Endothelial cell of umbilical vein (primary cell): ENCODE measurements at regions of chr10 and their contacts with region 1.

Region 1: GRCh38 chr10:95561182-95562075 is at the start of gene SORBS1:
- DNase-seq: peak; percentile 98
- H3K4me3 ChIP-seq: peak within 1 kb of the TSS; percentile 74 to 94 (median 88)
- H3K27ac ChIP-seq: peak within 1 kb of the TSS; percentile 55
- H3K4me1 ChIP-seq: peaks cover 2% of the 10 kb centered on the region
- H3K27me3 ChIP-seq: peaks cover 2 to 7% of the 10 kb centered on the region in 2 experiments
- CTCF ChIP-seq: no peak
- POLR2A ChIP-seq: peak; percentile 65
- total RNA-seq, gene SORBS1: 3.2 and 7.9 TPM in 2 replicates

Region 2: DNA sequence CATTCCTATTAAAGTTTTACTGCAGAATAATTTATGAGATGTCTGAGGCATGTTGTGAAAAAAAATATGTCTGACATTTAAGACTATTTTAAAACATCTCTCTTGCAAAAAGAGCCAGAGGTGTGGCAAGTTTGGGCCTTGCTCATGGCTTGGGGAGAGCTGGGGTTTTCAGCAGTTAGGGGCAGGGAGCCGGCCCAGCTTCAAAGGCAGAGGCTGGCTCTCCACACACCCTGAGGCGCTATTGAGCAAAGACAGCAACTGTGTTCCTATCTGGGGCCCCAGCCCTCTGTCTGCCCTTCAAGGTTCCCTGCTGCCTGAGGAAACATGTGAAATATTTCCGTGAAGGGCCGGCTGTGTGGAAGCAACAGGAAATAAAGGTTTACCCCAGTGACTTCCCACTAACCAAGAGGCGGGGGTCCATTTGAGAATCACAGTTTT is 94.2 kb before region 1 on chr10:
- CTCF ChIA-PET with region 1: no interaction called
- POLR2A ChIA-PET with region 1: interaction called, 4 read pairs
- dilution Hi-C with region 1: no loop called
- intact Hi-C with region 1: loop called (anchors 1 kb)
- DNase-seq: peak; percentile 81
- H3K4me3 ChIP-seq: no peak overlapping the region
- H3K27ac ChIP-seq: no peak overlapping the region
- H3K4me1 ChIP-seq: peaks cover 8% of the 10 kb centered on the region
- H3K27me3 ChIP-seq: peaks cover 0 to 2% of the 10 kb centered on the region in 2 experiments
- CTCF ChIP-seq: peak; percentile 8 to 54
- POLR2A ChIP-seq: no peak

Region 3: DNA sequence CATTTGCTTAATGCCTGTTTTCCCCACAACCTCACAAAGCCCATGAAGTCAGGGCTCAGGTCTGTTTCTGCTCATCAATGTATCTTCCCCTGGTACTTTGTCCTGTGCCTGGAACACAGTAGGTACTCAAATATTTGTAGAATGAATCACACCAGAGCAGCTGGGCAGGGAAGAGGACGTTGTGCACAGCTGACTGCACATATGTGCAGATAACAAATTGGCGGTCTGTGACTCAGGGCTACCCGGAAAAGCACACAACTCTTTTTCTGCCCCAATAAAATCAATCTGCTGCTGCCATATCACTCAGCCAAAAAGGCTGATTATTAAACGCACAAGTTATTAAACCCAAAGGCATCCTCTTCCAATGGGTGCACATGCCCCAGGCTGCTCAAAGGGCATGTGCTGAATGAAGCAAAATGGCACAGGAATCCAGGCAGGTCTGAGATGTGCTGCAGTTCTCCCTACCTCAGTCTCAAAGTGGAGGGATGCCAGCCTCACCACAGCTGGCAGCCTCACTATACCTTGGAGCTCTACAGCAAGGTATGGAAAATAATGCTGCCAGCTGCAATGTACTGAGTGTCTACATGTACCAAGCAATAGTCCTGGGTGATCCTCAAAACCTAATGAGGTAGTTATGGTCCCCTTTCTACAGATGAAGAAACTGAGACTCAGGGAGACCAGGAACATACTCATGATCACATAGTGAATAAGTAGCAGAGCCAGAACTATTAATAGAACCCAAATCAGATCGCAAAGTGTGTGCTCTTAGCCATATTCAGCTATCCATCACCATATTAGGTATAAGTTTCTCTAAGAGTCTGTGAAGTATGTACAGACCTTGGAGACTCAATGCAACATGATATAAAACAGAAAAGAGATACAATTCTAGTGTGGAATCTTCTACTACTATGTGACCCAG is 43.6 kb before region 1 on chr10:
- CTCF ChIA-PET with region 1: no interaction called
- POLR2A ChIA-PET with region 1: no interaction called
- dilution Hi-C with region 1: no loop called
- intact Hi-C with region 1: loop called (anchors 1 kb)
- DNase-seq: peak; percentile 82
- H3K4me3 ChIP-seq: no peak overlapping the region
- H3K27ac ChIP-seq: peak overlapping the region; percentile 77
- H3K4me1 ChIP-seq: peaks cover 52% of the 10 kb centered on the region
- H3K27me3 ChIP-seq: no peaks in the 10 kb centered on the region
- CTCF ChIP-seq: no peak
- POLR2A ChIP-seq: no peak

Region 4: DNA sequence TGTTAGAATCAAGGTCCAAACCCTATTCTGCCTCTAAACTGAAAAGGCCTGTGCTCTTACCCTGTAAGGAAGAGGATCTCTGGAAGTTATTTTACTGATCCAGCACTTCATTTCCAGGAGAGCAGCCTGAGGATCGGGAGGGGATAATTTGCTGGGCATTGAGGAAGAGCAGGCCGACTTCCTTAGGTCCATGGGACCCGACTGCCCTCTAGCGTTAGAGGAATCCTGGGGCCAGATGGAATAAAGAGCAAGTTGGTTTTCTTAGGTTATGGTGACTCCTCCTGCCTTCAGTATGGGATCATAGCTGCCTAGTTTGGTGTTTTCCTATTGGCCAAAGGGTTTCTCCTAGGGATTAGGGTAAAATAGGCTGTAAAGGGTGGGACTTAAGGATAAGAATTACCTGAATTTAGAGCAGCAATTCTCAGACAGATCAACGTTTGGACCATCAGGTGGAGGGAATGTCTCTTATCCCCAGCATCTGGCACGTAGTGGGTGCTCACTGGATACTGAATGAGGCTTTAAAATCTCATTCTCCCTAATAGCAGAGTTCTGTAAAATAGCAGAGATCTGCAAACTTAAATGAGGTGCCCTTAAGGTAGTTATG is 39.8 kb after region 1 on chr10:
- CTCF ChIA-PET with region 1: no interaction called
- POLR2A ChIA-PET with region 1: no interaction called
- dilution Hi-C with region 1: no loop called
- intact Hi-C with region 1: loop called (anchors 1 kb)
- DNase-seq: peak; percentile 89
- H3K4me3 ChIP-seq: no peak overlapping the region
- H3K27ac ChIP-seq: no peak overlapping the region
- H3K4me1 ChIP-seq: no peaks in the 10 kb centered on the region
- H3K27me3 ChIP-seq: peaks cover 0 to 7% of the 10 kb centered on the region in 2 experiments
- CTCF ChIP-seq: peak; percentile 90 to 96
- POLR2A ChIP-seq: no peak